Activated CD4-positive, alpha-beta memory T cell treated with anti-CD3 and anti-CD28 coated beads for 36 hours (primary cell): ENCODE measurements at regions of chr12 and their contacts with region 1.

Region 1: DNA sequence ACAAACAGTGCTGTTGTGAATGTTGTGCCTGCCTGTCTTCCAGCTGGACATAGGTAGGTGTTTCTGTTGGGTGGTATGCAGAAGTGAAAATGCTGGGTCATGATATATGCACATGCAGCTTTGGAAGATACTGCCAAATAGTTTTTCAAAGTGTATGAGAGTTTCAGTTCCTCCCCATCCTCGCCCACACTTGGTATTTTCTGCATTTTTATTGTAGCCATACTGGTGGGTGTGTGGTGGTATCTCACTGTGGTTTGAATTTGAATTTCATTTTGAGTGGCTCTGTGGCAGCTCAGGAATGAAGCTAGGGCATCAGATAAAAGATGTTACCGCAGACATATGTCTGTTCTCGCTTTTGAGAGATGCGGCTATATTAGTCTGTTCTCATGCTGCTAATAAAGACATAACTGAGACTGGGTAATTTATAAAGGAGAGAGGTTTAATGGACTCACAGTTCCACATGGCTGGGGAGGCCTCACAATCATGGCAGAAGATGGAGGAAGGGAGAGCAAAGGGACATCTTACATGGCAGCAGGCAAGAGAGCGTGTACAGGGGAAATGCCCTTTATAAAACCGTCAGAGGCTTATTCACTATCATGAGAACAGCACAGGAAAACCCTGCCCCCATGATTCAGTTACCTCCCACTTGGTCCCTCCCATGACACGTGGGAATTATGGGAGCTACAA is 183.1 kb downstream of the CAND1 start:
- DNase-seq: peak; percentile 42
- H3K4me3 Mint-ChIP-seq: peak overlapping the region; percentile 1
- H3K27ac Mint-ChIP-seq: no peak overlapping the region
- H3K4me1 Mint-ChIP-seq: peaks cover 48% of the 10 kb centered on the region
- H3K27me3 Mint-ChIP-seq: peaks cover 4% of the 10 kb centered on the region

Region 2: GRCh38 chr12:67515679-67516340 is 63.5 kb after region 1 on chr12:
- CTCF ChIA-PET with region 1: interaction called, 5 read pairs
- POLR2A ChIA-PET with region 1: no interaction called
- intact Hi-C with region 1: loop called (anchors 2 kb)
- DNase-seq: peak; percentile 38
- H3K4me3 Mint-ChIP-seq: peak overlapping the region; percentile 2
- H3K27ac Mint-ChIP-seq: peak overlapping the region; percentile 50
- H3K4me1 Mint-ChIP-seq: peaks cover 47% of the 10 kb centered on the region
- H3K27me3 Mint-ChIP-seq: no peaks in the 10 kb centered on the region

Region 3: GRCh38 chr12:67592216-67593011 is 140.2 kb after region 1 on chr12:
- CTCF ChIA-PET with region 1: no interaction called
- POLR2A ChIA-PET with region 1: no interaction called
- intact Hi-C with region 1: loop called (anchors 5 kb)
- DNase-seq: no peak
- H3K4me3 Mint-ChIP-seq: no peak overlapping the region
- H3K27ac Mint-ChIP-seq: peak overlapping the region; percentile 67
- H3K4me1 Mint-ChIP-seq: peaks cover 47% of the 10 kb centered on the region
- H3K27me3 Mint-ChIP-seq: no peaks in the 10 kb centered on the region